ENCODE measurements at regions of chr15 and their contacts with region 1.

Region 1: DNA sequence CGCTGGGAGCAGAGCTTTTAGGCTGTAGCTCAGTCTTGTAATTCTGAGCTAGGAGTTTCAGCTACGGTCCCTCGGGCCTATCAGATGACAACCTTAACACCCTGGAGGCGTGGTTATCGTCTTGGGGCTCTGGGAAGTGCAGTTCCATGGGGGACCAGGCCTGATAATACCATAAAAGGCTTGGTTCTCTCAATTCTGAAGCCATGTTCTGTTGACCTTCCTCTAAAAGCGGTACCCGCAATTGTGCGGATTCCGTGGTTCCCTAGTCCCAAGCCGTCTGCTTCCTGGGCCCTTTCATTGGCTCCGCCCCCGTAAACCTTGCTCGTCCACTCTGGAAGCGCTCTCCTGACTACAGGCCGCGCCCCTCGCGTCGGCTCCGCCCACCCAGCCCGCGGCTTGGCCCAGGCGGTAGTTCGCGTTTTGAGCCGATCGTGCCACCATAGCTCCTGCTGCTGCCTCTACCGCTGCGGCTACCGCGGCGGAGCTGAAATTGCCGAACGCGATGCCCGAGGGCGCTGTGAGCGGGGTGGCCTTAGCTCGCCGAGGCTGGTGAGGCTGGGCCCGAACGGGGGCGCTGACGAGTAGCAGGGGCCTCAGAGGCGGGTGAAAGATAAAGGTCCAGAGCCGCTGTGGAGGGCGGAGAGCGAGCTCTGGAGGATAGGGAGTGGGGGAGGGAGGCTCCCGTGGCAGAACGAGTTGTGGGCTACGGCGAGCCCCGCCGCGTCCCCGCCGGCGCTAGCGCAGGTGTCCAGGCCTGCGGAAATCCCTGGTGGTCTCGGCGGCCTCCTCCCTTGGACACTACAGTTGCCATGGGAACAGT is at the start of gene MAPKBP1:
- DNase-seq: peak; percentile 93
- H3K4me3 Mint-ChIP-seq: peak within 1 kb of the TSS; percentile 82
- H3K27ac Mint-ChIP-seq: peak within 1 kb of the TSS; percentile 71
- H3K4me1 Mint-ChIP-seq: no peaks in the 10 kb centered on the region
- H3K27me3 Mint-ChIP-seq: no peaks in the 10 kb centered on the region
- CTCF ChIP-seq: no peak
- total RNA-seq, gene MAPKBP1: 9.9 and 11.3 TPM in 2 replicates

Region 2: DNA sequence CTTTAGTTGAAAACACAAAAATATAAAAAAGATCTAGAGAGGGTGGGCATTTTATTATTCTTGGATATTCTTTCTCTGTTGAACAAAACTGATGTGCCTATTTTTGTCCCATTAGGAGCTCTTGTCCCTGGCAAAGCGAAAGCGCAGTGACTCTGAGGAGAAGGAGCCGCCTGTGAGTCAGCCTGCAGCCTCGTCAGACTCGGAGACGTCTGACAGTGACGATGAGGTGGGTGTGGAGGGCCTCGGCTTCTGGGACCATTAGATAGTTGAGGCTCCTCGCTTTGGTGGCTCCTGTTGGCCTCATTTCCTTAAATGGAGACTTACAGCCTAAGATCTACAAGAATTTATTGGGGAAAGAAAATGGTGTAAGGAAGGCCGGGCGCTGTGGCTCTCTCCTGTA is 336.1 kb before region 1 on chr15:
- CTCF ChIA-PET with region 1: no interaction called
- intact Hi-C with region 1: no loop called
- DNase-seq: no peak
- H3K4me3 Mint-ChIP-seq: no peak overlapping the region
- H3K27ac Mint-ChIP-seq: no peak overlapping the region
- H3K4me1 Mint-ChIP-seq: no peaks in the 10 kb centered on the region
- H3K27me3 Mint-ChIP-seq: no peaks in the 10 kb centered on the region
- CTCF ChIP-seq: no peak

Region 3: DNA sequence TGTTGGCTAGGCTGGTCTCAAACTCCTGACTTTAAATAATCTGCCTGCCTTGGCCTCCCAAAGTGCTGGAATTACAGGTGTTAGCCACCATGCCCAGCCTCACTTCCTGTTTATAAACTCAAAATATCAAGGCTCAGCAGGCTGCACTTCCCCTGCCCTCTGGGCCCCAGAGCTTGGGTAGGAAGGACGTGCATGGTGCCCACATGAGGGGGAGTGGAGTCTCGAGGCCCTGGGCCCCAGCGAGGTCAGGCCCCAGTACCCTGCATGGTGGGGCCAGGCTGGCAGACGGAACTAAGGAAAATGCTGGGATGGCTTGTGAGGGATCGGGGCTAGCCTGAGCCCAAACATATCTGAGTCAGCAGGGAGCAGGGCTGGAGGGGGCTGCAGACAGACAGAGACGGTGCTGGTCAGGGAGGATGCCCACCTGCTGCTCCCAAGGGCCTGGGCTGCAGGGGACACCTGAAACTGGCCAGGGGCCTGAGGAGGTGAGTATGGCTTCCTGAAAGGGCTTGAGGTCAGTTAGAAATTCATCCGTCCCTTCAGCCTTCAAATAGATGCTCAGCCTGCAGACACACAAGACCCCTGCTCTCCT is 114.5 kb after region 1 on chr15:
- CTCF ChIA-PET with region 1: no interaction called
- intact Hi-C with region 1: no loop called
- DNase-seq: no peak
- H3K4me3 Mint-ChIP-seq: no peak overlapping the region
- H3K27ac Mint-ChIP-seq: no peak overlapping the region
- H3K4me1 Mint-ChIP-seq: no peaks in the 10 kb centered on the region
- H3K27me3 Mint-ChIP-seq: no peaks in the 10 kb centered on the region
- CTCF ChIP-seq: no peak

Region 4: DNA sequence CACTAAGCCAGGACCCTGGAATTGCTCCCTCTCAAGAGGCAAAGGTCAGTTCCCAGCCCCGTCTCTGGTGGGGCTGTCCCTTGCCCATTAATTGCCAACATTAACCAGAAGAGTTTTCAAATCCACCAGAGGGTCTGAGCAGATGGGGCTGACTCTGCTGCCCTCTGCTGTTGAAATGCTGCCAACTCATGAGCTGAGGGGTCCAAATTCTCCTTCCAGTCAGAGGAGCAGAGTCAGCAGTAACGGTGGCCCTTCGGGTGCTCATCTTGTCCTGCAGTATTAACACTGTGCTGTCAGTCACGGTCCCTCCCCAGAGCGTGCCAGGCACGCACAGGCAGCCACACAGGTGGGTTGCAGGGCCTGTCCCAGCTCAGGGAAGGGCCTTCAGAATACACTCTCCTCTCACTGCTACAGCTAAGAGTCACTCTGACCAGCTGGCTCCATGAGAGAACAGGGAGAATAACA is 130.3 kb after region 1 on chr15:
- CTCF ChIA-PET with region 1: interaction called, 13 read pairs
- intact Hi-C with region 1: loop called (anchors 5 kb)
- DNase-seq: peak; percentile 45
- H3K4me3 Mint-ChIP-seq: no peak overlapping the region
- H3K27ac Mint-ChIP-seq: no peak overlapping the region
- H3K4me1 Mint-ChIP-seq: no peaks in the 10 kb centered on the region
- H3K27me3 Mint-ChIP-seq: no peaks in the 10 kb centered on the region
- CTCF ChIP-seq: peak; percentile 55

Region 5: DNA sequence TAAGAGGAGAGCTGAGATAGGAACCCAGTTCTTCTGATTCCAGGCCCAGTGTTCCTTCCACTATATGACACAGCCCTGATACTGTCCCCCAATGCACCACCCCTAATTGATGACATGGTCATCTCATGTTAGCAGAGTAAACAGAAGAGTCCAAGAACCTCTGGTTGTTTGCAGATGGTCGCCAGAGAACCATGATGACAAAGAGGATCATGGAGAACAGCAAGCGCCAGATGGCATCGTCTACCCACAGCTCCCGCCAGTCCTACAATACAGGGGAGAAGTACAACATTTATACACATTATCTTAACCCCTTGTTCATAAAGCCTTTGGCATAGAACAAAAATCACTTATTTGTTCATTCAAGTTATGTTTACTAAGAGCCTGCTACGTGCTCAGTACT is 452.4 kb after region 1 on chr15:
- CTCF ChIA-PET with region 1: no interaction called
- intact Hi-C with region 1: no loop called
- DNase-seq: no peak
- H3K4me3 Mint-ChIP-seq: no peak overlapping the region
- H3K27ac Mint-ChIP-seq: no peak overlapping the region
- H3K4me1 Mint-ChIP-seq: no peaks in the 10 kb centered on the region
- H3K27me3 Mint-ChIP-seq: no peaks in the 10 kb centered on the region
- CTCF ChIP-seq: no peak

Measured in Calu3 (cell line).